ENCODE measurements at regions of chr7 and their contacts with region 1.

Region 1: GRCh38 chr7:12056381-12056780 is 154.7 kb upstream of the TMEM106B start:
- DNase-seq: no peak
- ATAC-seq: no peak
- H3K4me3 ChIP-seq: no peak overlapping the region
- H3K4me3 Mint-ChIP-seq: no peak overlapping the region
- H3K27ac ChIP-seq: no peak overlapping the region
- H3K27ac Mint-ChIP-seq: no peak overlapping the region
- H3K4me1 ChIP-seq: no peaks in the 10 kb centered on the region
- H3K4me1 Mint-ChIP-seq: no peaks in the 10 kb centered on the region
- H3K27me3 ChIP-seq: no peaks in the 10 kb centered on the region
- H3K27me3 Mint-ChIP-seq: peaks cover 3 to 10% of the 10 kb centered on the region in 2 donors

Region 2: DNA sequence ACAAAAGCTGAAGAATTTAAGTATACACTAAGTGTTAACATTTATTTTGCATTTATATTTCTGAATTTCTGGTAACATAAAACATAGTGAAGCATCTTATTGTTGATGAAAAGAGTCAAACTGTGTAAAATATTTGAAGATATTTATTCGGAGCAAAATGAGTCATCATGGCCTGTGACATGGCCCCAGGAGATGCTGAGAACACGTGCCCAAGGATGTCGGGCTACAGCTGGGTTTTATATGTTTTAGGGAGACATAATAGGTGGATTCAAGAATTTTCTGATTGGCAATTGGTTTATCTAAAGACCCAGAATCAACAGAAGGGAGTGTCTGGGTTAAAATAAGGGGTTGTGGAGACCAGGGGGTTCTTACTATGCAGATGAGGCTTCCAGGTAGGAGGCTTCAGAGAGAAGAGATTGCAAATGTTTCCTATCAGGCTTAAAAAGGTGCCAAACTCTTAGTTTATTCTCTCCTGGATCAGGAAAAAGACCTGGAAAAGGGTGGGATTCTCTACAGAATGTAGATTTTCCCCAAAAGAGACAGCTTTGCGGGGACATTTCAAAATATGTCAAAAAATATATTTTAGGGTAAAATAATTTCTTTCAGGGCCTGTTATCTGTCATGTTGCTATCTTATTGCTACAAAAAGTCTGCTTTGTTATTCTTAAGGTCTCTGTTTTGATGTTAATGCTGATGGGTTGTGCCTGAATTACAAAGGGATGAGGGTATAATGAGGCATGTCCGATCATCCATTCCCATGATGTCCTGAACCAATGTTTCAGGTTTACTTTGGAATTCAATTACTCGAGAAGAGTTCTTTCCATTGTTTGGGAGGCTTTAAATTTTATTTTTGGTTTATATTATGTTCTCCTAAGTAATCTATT is 272.7 kb after region 1 on chr7:
- CTCF ChIA-PET with region 1: interaction called in 1 of 2 experiments, 10 read pairs
- POLR2A ChIA-PET with region 1: no interaction called
- DNase-seq: no peak
- ATAC-seq: no peak
- H3K4me3 ChIP-seq: no peak overlapping the region
- H3K4me3 Mint-ChIP-seq: no peak overlapping the region
- H3K27ac ChIP-seq: no peak overlapping the region
- H3K27ac Mint-ChIP-seq: no peak overlapping the region
- H3K4me1 ChIP-seq: no peaks in the 10 kb centered on the region
- H3K4me1 Mint-ChIP-seq: no peaks in the 10 kb centered on the region
- H3K27me3 ChIP-seq: no peaks in the 10 kb centered on the region
- H3K27me3 Mint-ChIP-seq: no peaks in the 10 kb centered on the region